CD4-positive, alpha-beta memory T cell (primary cell): ENCODE measurements at regions of chr13 and their contacts with region 1.

Region 1: DNA sequence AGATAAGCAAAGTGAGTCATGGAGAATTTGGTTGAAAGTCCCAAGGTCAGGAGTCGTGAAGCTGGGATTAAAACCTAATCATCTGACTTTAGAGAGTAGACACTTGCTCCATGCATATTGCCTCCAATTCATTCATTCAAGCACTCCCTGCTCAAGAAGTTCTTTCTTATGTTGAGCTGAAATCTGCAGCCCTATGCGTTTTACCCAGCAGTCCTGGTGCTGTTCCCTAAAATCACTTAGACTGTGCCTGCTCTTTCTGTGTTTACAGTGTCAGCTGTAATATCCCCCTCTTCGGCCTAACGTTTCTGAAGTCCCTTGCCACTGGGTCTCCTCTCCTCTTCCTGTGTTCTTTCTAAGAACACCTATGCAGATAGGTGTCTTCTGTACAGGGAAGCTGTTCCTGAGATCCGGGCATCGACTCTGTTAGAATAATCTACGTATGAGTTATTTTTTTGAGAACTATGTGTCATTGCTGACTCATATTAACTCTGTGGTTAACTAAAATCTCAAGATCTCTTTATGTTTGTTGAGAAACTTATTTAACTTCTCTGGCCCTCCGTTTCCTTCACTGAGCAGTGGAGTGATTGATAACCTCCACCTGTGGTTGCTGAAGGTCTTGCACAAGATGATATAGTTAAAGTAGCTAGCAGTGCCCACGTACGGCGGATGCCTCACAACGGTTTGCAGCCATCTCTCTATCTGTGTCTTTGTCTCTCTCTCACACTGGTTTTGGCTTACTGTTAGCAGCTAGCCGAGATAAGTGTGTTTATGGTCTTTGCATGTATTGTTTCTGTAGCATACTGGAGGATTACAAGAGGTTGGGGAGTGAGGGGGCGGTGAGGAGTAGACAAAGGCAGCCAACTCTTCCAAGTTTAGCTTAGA is 4.7 kb downstream of the ALOX5AP start:
- DNase-seq: peak; percentile 63 to 86 (median 69)
- H3K4me3 ChIP-seq: peak overlapping the region; percentile 2 to 46
- H3K4me3 Mint-ChIP-seq: peak overlapping the region; percentile 80 to 98 (median 86)
- H3K27ac ChIP-seq: peak overlapping the region; percentile 47
- H3K27ac Mint-ChIP-seq: peak overlapping the region; percentile 81 to 96 (median 91)
- H3K4me1 ChIP-seq: peaks cover 84% of the 10 kb centered on the region
- H3K4me1 Mint-ChIP-seq: peaks cover 60 to 90% (median 76%) of the 10 kb centered on the region in 4 donors
- H3K27me3 ChIP-seq: no peaks in the 10 kb centered on the region
- H3K27me3 Mint-ChIP-seq: no peaks in the 10 kb centered on the region

Region 2: GRCh38 chr13:30673669-30674521 is 66.1 kb before region 1 on chr13:
- CTCF ChIA-PET with region 1: interaction called, 5 read pairs
- POLR2A ChIA-PET with region 1: interaction called, 3 read pairs
- intact Hi-C with region 1: loop called (anchors 1 kb)
- DNase-seq: peak; percentile 87 to 91 (median 90)
- H3K4me3 ChIP-seq: peak overlapping the region; percentile 62 to 74
- H3K4me3 Mint-ChIP-seq: peak overlapping the region; percentile 85 to 94 (median 90)
- H3K27ac ChIP-seq: peak overlapping the region; percentile 20
- H3K27ac Mint-ChIP-seq: peak overlapping the region; percentile 83 to 100 (median 94)
- H3K4me1 ChIP-seq: peaks cover 7% of the 10 kb centered on the region
- H3K4me1 Mint-ChIP-seq: peaks cover 14 to 36% (median 20%) of the 10 kb centered on the region in 4 donors
- H3K27me3 ChIP-seq: no peaks in the 10 kb centered on the region
- H3K27me3 Mint-ChIP-seq: peaks cover 0 to 4% of the 10 kb centered on the region in 2 donors

Region 3: DNA sequence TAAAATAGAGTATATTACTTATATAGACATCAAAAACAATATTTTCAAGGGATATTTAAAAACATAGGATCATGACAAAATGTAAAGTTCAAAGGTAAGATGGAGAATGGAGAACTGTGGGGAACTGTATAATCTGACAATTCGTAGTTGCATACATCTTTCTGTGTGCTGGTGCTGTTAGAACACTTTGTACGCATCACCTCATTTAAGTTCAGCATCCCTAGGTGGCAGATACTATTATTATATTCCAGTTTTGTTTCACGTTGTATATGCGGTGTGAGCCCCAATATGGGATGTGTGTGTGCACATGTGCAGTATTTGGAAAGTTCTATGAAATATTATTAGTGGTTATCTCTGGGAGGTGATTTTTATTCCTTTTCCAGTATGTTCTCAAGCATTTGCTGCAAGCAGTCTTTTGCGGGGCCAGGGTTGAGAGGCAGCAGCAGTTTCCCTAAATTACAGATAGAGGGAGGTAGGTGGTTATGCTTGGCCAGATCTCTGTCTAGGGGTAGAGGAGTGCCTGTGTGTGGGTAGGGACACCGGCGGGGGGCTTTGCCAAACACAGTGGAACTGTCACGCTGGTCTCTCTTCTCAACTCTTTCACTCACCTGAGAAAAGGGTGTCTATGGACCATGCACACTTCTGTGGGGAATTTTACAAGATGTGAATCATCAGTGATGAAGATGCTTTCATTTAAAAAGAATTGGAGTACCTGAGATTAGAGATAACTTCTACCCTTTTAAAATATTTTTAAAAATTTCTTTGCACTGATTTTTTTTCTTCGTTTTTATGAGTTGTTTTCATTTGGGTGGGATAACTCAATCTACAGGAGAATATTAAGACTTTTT is 60.3 kb before region 1 on chr13:
- CTCF ChIA-PET with region 1: interaction called, 5 read pairs
- POLR2A ChIA-PET with region 1: interaction called, 3 read pairs
- intact Hi-C with region 1: loop called (anchors 1 kb)
- DNase-seq: peak; percentile 42 to 52 (median 47)
- H3K4me3 ChIP-seq: no peak overlapping the region
- H3K4me3 Mint-ChIP-seq: peak overlapping the region in 1 of 8 donors; percentile 30
- H3K27ac ChIP-seq: no peak overlapping the region
- H3K27ac Mint-ChIP-seq: peak overlapping the region in 6 of 7 donors; percentile 3 to 46 (median 16)
- H3K4me1 ChIP-seq: no peaks in the 10 kb centered on the region
- H3K4me1 Mint-ChIP-seq: peaks cover 8 to 11% (median 11%) of the 10 kb centered on the region in 4 donors
- H3K27me3 ChIP-seq: no peaks in the 10 kb centered on the region
- H3K27me3 Mint-ChIP-seq: no peaks in the 10 kb centered on the region

Region 4: GRCh38 chr13:30702006-30702405 is 38.0 kb before region 1 on chr13:
- CTCF ChIA-PET with region 1: no interaction called
- POLR2A ChIA-PET with region 1: no interaction called
- intact Hi-C with region 1: loop called (anchors 5 kb)
- DNase-seq: no peak
- H3K4me3 ChIP-seq: no peak overlapping the region
- H3K4me3 Mint-ChIP-seq: no peak overlapping the region
- H3K27ac ChIP-seq: no peak overlapping the region
- H3K27ac Mint-ChIP-seq: no peak overlapping the region
- H3K4me1 ChIP-seq: no peaks in the 10 kb centered on the region
- H3K4me1 Mint-ChIP-seq: peaks cover 0 to 6% (median 3%) of the 10 kb centered on the region in 4 donors
- H3K27me3 ChIP-seq: no peaks in the 10 kb centered on the region
- H3K27me3 Mint-ChIP-seq: peaks cover 0 to 10% of the 10 kb centered on the region in 2 donors

Region 5: GRCh38 chr13:30774214-30774730 is 34.3 kb after region 1 on chr13:
- CTCF ChIA-PET with region 1: interaction called, 6 read pairs
- POLR2A ChIA-PET with region 1: interaction called, 14 read pairs
- intact Hi-C with region 1: no loop called
- DNase-seq: peak; percentile 55 to 73 (median 67)
- H3K4me3 ChIP-seq: peak overlapping the region in 1 of 2 donors; percentile 48
- H3K4me3 Mint-ChIP-seq: peak overlapping the region; percentile 65 to 84 (median 74)
- H3K27ac ChIP-seq: peak overlapping the region; percentile 58
- H3K27ac Mint-ChIP-seq: peak overlapping the region; percentile 86 to 96 (median 94)
- H3K4me1 ChIP-seq: peaks cover 23% of the 10 kb centered on the region
- H3K4me1 Mint-ChIP-seq: peaks cover 25 to 42% (median 32%) of the 10 kb centered on the region in 4 donors
- H3K27me3 ChIP-seq: no peaks in the 10 kb centered on the region
- H3K27me3 Mint-ChIP-seq: no peaks in the 10 kb centered on the region

Region 6: GRCh38 chr13:30796132-30796572 is 56.1 kb after region 1 on chr13:
- CTCF ChIA-PET with region 1: interaction called, 4 read pairs
- POLR2A ChIA-PET with region 1: interaction called, 6 read pairs
- intact Hi-C with region 1: loop called (anchors 5 kb)
- DNase-seq: peak in 2 of 5 donors; percentile 11 to 36
- H3K4me3 ChIP-seq: peak overlapping the region in 1 of 2 donors; percentile 10
- H3K4me3 Mint-ChIP-seq: peak overlapping the region; percentile 63 to 88 (median 73)
- H3K27ac ChIP-seq: no peak overlapping the region
- H3K27ac Mint-ChIP-seq: peak overlapping the region; percentile 58 to 92 (median 84)
- H3K4me1 ChIP-seq: peaks cover 26% of the 10 kb centered on the region
- H3K4me1 Mint-ChIP-seq: peaks cover 20 to 34% (median 27%) of the 10 kb centered on the region in 4 donors
- H3K27me3 ChIP-seq: no peaks in the 10 kb centered on the region
- H3K27me3 Mint-ChIP-seq: no peaks in the 10 kb centered on the region

Region 7: DNA sequence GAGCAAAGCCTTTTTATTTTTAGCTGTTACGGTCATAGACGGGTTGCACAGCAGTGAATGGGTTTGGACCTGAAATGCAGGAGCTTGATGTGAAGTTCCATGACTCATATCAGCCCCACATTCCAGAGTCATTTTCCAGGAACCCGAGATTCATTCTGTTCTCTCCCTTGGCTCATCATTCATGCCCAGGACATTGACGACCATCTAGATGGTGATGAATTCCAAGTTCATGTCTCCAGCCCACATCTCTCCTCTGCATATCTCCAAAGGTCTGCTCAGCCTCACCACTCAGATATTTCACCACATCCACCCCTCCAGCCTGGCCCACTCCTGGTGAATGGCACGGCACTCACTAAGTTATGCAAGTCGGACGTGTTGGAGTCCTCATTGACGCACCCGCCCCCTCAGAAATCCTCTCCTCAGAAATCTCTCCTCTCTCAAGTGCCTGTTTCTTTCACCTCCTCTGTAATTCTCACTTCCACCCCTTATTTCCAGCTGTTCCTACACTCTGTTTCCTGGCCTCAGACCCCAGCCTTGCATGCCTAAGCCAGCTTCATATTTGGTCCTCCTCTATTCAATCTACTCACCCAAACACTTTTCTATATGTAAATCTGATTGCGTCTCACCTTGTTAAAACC is 78.4 kb after region 1 on chr13:
- CTCF ChIA-PET with region 1: no interaction called
- POLR2A ChIA-PET with region 1: no interaction called
- intact Hi-C with region 1: no loop called
- DNase-seq: no peak
- H3K4me3 ChIP-seq: no peak overlapping the region
- H3K4me3 Mint-ChIP-seq: no peak overlapping the region
- H3K27ac ChIP-seq: no peak overlapping the region
- H3K27ac Mint-ChIP-seq: no peak overlapping the region
- H3K4me1 ChIP-seq: no peaks in the 10 kb centered on the region
- H3K4me1 Mint-ChIP-seq: peaks cover 0 to 1% (median 0%) of the 10 kb centered on the region in 4 donors
- H3K27me3 ChIP-seq: no peaks in the 10 kb centered on the region
- H3K27me3 Mint-ChIP-seq: peaks cover 9 to 10% of the 10 kb centered on the region in 2 donors

Region 8: GRCh38 chr13:30845297-30846214 is 105.6 kb after region 1 on chr13:
- CTCF ChIA-PET with region 1: no interaction called
- POLR2A ChIA-PET with region 1: no interaction called
- intact Hi-C with region 1: no loop called
- DNase-seq: no peak
- H3K4me3 ChIP-seq: no peak overlapping the region
- H3K4me3 Mint-ChIP-seq: peak overlapping the region in 3 of 8 donors; percentile 13 to 35 (median 34)
- H3K27ac ChIP-seq: no peak overlapping the region
- H3K27ac Mint-ChIP-seq: peak overlapping the region in 6 of 7 donors; percentile 42 to 89 (median 78)
- H3K4me1 ChIP-seq: peaks cover 28% of the 10 kb centered on the region
- H3K4me1 Mint-ChIP-seq: peaks cover 15 to 21% (median 18%) of the 10 kb centered on the region in 4 donors
- H3K27me3 ChIP-seq: no peaks in the 10 kb centered on the region
- H3K27me3 Mint-ChIP-seq: no peaks in the 10 kb centered on the region

Region 9: GRCh38 chr13:31161828-31162590 is 422.0 kb after region 1 on chr13 and contains the start of gene HSPH1:
- CTCF ChIA-PET with region 1: no interaction called
- POLR2A ChIA-PET with region 1: no interaction called
- intact Hi-C with region 1: loop called (anchors 1 kb)
- DNase-seq: peak; percentile 99 to 100 (median 100)
- H3K4me3 ChIP-seq: peak within 1 kb of the TSS; percentile 79 to 96
- H3K4me3 Mint-ChIP-seq: peak within 1 kb of the TSS; percentile 96 to 99 (median 98)
- H3K27ac ChIP-seq: peak within 1 kb of the TSS; percentile 95
- H3K27ac Mint-ChIP-seq: peak within 1 kb of the TSS; percentile 97 to 100 (median 99)
- H3K4me1 ChIP-seq: peaks cover 37% of the 10 kb centered on the region
- H3K4me1 Mint-ChIP-seq: peaks cover 23 to 54% (median 29%) of the 10 kb centered on the region in 4 donors
- H3K27me3 ChIP-seq: no peaks in the 10 kb centered on the region
- H3K27me3 Mint-ChIP-seq: no peaks in the 10 kb centered on the region
- total RNA-seq, gene HSPH1: 68.6 to 75.5 TPM